ENCODE measurements at regions of chr1 and their contacts with region 1.

Region 1: GRCh38 chr1:36342481-36343478 is 19.3 kb upstream of the EVA1B start:
- DNase-seq: peak; percentile 75
- H3K4me3 ChIP-seq: no peak overlapping the region
- H3K27ac ChIP-seq: peak overlapping the region; percentile 15 to 58 (median 42)
- H3K4me1 ChIP-seq: peaks cover 0 to 6% (median 2%) of the 10 kb centered on the region in 4 donors
- H3K27me3 ChIP-seq: no peaks in the 10 kb centered on the region
- CTCF ChIP-seq: peak; percentile 36 to 67 (median 56)
- EP300 ChIP-seq: no peak
- POLR2A ChIP-seq: no peak

Region 2: DNA sequence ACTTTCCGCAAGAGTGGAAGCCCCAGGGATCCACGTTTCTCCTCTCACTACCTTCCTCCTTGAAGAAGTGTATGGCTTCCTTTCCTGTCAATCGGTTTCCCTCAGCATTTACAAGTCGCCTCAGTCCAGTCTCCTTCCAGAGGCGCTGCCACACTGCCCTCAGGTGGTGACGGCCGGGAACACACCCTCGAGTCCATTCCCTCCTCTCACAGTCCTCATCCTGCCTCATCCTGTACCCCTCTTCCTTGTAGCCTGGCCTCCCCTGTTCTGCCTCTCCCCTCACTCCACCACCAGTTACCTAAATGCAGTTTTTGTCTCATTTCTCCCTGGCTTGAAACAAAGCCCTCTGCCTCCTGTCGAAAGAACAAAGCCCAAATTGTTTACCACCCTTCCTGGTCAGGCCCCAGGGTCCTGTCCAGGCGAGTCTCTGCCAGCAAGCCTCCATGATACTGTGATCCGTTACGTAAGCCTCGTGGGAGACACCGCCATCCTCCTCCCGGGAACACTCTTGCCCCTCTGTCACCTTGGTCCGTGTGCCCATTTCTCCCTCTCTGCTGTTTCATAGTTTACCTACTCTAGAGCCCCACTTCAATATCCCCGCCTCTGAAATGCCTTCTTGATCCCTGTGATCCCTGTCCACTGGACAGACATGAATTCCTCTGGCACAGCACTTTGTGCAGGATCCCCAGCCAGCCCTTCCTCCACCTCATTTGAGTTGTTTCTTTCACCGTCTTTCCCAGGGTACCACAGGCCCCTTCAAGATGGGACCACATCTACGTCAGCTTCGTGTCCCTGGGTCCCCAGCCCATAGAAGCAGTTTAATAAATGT is 78.3 kb after region 1 on chr1:
- intact Hi-C with region 1: loop called (anchors 1 kb)
- DNase-seq: peak; percentile 92
- H3K4me3 ChIP-seq: no peak overlapping the region
- H3K27ac ChIP-seq: peak overlapping the region in 1 of 4 donors; percentile 38
- H3K4me1 ChIP-seq: peaks cover 0 to 7% (median 5%) of the 10 kb centered on the region in 4 donors
- H3K27me3 ChIP-seq: no peaks in the 10 kb centered on the region
- CTCF ChIP-seq: peak; percentile 88 to 94 (median 92)
- EP300 ChIP-seq: no peak
- POLR2A ChIP-seq: no peak

Measured in sigmoid colon (tissue), 7 donors.